ENCODE measurements at regions of chr4 and their contacts with region 1.

Region 1: GRCh38 chr4:82739316-82740179 is 59.0 kb downstream of the SCD5 start:
- DNase-seq: peak; percentile 78
- CTCF ChIP-seq: peak; percentile 85

Region 2: GRCh38 chr4:82594456-82594855 is 145.1 kb before region 1 on chr4:
- CTCF ChIA-PET with region 1: no interaction called
- POLR2A ChIA-PET with region 1: no interaction called
- DNase-seq: no peak
- CTCF ChIP-seq: no peak

Region 3: GRCh38 chr4:82721819-82722423 is 17.6 kb before region 1 on chr4:
- CTCF ChIA-PET with region 1: interaction called, 17 read pairs
- POLR2A ChIA-PET with region 1: no interaction called
- DNase-seq: peak; percentile 30
- CTCF ChIP-seq: peak; percentile 81

Region 4: DNA sequence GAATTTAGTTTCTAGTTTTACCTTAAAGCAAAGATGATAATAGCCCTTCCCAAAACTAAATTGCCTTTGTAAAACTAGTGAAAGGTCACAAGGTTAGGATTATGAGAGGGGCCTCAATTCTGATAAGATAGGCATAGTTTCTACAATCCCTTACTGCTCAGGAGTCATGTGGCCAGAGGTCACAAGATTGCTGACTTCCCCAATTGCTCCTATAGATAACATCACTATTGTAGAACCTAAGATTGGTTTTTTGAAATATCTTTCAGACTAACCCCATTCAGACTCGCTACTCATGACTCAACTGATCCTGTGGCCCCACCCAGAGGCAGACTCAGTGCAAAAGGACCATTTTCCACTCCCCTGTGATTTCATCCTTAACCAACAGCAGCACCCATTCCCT is 11.2 kb before region 1 on chr4:
- CTCF ChIA-PET with region 1: interaction called, 18 read pairs
- POLR2A ChIA-PET with region 1: no interaction called
- DNase-seq: no peak
- CTCF ChIP-seq: no peak

Region 5: DNA sequence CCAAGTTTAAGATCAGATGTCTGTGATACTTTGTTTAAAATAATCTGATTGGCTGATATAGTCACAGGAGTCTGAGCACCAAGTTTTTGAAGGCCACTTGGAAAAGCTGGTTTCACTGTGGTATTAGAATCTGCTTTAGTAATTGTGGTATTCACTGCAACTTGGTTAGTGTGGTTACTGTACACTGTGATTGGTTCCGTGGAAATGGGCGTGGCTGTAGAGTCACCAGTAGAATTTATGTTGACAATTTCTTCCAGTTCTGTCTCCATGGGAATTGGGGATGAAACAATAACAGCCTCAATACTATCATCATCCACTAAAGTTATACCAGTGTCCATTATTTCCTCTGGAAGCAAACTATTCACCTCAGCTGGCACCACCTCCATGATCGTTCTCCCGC is 244.9 kb after region 1 on chr4:
- CTCF ChIA-PET with region 1: no interaction called
- POLR2A ChIA-PET with region 1: no interaction called
- DNase-seq: no peak
- CTCF ChIP-seq: no peak